Cardiac septum (tissue), 1 donor: ENCODE measurements at regions of chr20 and their contacts with region 1.

Region 1: GRCh38 chr20:43749734-43750294 is 23.0 kb upstream of the GTSF1L start:
- DNase-seq: peak; percentile 92

Region 2: DNA sequence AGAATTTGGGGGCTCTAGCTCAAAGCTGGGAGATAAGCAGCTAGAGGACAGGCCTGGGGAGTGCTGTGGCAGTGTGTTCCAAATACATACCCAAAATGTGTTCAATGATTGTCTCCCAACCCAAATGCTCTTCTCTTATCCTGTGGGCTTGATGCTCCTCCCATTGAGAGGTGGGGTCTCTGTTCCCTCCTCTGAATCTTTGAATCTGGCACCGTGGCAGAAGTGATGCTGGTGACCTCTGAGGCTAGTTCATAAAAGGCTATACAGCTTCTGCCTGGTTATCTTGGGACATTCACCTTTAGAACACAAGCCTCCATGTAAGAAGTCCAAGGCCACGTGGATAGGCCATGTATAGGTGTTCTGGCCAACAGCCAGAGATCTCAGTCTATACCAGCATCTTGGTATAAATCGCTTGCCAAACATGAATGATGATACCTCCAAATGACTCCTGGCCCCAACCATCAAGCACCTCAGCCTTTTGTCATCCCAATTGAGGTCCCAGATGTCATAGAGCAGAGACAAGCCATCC is 98.8 kb before region 1 on chr20:
- intact Hi-C with region 1: no loop called
- DNase-seq: no peak

Region 3: DNA sequence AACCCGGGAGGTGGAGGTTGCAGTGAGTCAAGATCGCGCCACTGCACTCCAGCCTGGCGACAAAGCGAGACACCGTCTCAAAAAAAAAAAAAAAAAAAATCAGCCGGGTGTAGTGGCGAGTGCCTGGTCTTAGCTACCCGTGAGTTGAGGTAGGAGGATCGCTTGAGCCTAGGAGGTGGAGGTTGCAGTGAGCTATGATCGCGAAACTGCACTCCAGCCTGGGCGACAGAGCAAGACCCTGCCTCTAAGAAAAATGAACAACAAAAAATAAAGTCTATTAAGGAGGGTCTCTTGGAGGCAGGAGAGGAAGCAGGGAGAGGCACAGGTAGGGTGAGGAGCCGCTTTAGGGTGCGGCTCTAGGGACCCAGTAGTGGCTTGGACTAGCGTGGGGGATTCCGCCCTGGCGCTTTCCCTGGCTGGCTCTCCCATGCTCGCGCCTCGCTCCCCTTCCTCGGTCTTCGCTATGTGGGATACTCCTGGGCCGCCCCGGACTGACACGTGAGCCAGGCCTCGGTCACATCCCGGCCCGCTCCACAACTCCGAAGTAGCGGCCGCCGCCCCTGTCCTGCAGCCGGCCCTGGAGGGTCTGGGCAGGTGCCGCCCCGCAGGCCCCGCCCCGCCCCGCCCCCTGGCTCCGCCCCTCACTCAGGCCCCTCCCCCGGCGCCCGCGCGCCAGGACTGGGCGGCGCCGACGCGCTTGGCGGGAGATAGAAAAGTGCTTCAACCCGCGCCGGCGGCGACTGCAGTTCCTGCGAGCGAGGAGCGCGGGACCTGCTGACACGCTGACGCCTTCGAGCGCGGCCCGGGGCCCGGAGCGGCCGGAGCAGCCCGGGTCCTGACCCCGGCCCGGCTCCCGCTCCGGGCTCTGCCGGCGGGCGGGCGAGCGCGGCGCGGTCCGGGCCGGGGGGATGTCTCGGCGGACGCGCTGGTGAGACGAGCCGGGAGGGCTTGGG is 83.2 kb before region 1 on chr20 and contains the start of gene MYBL2:
- intact Hi-C with region 1: no loop called
- DNase-seq: peak; percentile 85
- total RNA-seq, gene MYBL2: 0.13 TPM

Region 4: DNA sequence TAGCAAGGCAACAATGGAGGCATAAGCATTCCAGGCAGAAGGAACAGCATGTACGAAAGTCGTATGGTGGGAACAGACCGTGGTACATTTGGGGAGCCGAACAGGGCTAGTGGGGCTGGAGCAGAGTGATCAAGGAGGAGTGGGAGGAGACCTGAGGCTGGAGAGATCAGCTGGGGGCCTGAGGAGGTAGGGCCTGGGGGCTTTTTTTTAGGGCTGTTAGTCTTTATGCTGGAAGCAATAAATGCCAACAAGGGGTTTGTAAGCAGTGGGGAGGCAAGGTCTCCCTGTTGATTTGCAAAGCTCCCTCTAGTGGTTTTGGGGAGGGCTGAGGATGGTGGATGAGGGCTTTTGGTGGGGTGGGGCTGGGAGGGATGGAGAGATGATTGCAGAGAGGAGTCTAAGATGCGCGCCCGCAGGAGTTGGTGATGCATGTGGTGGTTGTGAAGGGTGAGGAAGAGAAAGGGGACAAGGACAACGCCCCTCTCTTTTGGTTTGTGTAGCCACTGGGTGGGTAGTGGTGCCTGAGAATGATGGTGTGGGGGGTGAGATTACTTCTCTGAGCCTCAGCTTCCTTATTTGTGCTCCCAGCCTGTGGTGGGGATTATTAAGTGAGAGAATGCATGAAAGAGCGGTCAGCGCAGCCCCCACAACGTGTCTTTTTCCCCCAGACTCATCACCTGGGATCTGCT is 90.7 kb after region 1 on chr20:
- intact Hi-C with region 1: loop called (anchors 5 kb)
- DNase-seq: no peak

Region 5: GRCh38 chr20:44196271-44196670 is 446.5 kb after region 1 on chr20:
- intact Hi-C with region 1: loop called (anchors 10 kb)
- DNase-seq: no peak